B cell (primary cell): ENCODE measurements at regions of chr6 and their contacts with region 1.

Region 1: DNA sequence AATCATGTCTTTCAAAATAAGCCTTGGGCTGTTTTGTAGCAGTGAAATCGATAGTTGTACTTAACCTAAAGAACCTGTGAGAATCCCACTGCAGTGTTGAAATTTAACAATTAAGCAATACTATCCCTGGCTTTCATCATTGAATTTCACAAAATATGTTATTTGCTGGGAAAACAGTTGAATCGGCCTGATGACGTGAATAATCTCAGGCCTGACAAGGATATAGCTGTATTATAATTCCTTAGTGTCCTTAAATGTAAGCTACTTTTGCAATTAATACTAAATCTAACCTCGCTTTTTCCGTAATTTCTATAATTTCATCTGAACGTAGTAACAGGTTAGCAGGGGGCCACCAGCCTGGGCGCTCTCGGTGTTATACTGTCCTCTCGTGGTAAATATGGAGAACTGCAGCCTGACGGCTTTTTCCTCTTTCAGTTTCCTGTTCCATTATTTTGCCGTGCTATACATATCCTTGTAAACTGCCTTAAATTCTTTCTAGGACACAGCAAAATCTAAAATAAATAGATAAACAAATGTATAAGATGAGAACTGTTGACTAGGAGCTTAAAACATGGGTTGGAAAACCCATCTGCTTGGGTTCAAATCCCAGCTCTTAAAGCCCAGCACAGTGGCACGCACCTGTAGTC is 24.0 kb downstream of the MTFR2 start:
- DNase-seq: peak; percentile 79
- ATAC-seq: peak; percentile 97
- H3K4me3 ChIP-seq: peak overlapping the region in 3 of 5 experiments; percentile 25 to 49 (median 38)
- H3K4me3 Mint-ChIP-seq: peak overlapping the region; percentile 51
- H3K27ac ChIP-seq: no peak overlapping the region
- H3K27ac Mint-ChIP-seq: no peak overlapping the region
- H3K4me1 ChIP-seq: peaks cover 10 to 14% of the 10 kb centered on the region in 2 donors
- H3K4me1 Mint-ChIP-seq: peaks cover 12% of the 10 kb centered on the region
- H3K27me3 ChIP-seq: no peaks in the 10 kb centered on the region
- H3K27me3 Mint-ChIP-seq: peaks cover 3% of the 10 kb centered on the region
- CTCF ChIP-seq: peak; percentile 100

Region 2: DNA sequence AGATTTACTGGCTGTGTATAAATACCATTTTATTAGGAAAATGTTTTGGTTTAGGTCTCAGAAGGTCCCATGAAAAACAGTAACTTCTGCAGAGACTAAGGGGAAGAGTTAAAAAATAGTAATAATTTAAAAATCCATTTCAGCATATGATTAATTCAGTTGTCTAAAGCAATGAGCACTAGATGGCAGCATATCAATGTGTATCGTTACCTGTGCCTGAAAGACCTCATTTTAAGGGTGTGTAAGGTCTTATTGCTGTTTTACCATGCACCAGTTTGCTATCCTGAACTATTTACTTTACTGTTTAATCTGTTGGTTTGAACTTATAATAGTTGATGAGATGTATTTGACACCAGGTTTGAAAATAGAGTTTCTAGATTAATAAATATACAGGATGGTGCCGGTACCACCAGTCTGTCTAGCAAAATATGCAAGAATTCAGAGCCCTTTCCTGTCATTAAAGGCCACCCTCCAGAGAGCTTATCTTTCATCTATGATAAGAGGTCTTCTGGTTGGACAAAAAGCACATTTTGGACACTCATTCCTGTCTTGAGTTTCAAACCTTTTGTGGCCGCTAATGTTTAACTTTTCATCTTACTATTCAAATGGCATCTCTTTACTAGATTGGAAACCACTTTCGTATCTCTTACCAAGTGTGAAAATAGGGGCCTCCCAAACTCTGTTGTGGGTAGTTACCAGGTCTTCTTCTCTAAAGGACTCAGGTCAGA is 719.7 kb before region 1 on chr6:
- CTCF ChIA-PET with region 1: interaction called, 24 read pairs
- POLR2A ChIA-PET with region 1: no interaction called
- intact Hi-C with region 1: loop called (anchors 1 kb)
- DNase-seq: peak; percentile 58
- ATAC-seq: peak; percentile 67
- H3K4me3 ChIP-seq: no peak overlapping the region
- H3K4me3 Mint-ChIP-seq: no peak overlapping the region
- H3K27ac ChIP-seq: no peak overlapping the region
- H3K27ac Mint-ChIP-seq: no peak overlapping the region
- H3K4me1 ChIP-seq: no peaks in the 10 kb centered on the region
- H3K4me1 Mint-ChIP-seq: peaks cover 2% of the 10 kb centered on the region
- H3K27me3 ChIP-seq: no peaks in the 10 kb centered on the region
- H3K27me3 Mint-ChIP-seq: no peaks in the 10 kb centered on the region
- CTCF ChIP-seq: peak; percentile 81

Region 3: DNA sequence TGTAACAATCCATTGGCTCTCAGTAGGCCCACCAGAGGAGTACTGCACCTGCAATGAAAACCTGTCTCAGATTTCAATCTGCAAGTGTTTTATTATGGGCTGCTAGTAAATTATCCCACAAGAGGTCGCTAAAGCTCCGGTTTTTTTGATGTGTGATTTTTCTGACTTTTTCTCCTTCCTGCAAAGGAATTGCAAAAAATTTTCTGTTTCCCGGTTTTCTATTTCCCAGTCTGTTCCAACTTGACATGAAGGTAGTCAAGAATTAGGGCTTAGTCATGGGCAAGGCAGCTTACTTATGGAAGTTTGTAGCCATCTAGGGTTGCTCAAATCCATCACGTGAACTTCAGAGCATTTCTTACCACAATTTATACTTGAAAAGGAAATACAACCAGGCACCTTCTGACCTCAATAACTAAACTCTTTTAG is 690.1 kb before region 1 on chr6:
- CTCF ChIA-PET with region 1: interaction called, 48 read pairs
- POLR2A ChIA-PET with region 1: no interaction called
- intact Hi-C with region 1: loop called (anchors 1 kb)
- DNase-seq: peak; percentile 42
- ATAC-seq: no peak
- H3K4me3 ChIP-seq: no peak overlapping the region
- H3K4me3 Mint-ChIP-seq: no peak overlapping the region
- H3K27ac ChIP-seq: no peak overlapping the region
- H3K27ac Mint-ChIP-seq: no peak overlapping the region
- H3K4me1 ChIP-seq: no peaks in the 10 kb centered on the region
- H3K4me1 Mint-ChIP-seq: peaks cover 8% of the 10 kb centered on the region
- H3K27me3 ChIP-seq: no peaks in the 10 kb centered on the region
- H3K27me3 Mint-ChIP-seq: peaks cover 10% of the 10 kb centered on the region
- CTCF ChIP-seq: peak; percentile 74

Region 4: DNA sequence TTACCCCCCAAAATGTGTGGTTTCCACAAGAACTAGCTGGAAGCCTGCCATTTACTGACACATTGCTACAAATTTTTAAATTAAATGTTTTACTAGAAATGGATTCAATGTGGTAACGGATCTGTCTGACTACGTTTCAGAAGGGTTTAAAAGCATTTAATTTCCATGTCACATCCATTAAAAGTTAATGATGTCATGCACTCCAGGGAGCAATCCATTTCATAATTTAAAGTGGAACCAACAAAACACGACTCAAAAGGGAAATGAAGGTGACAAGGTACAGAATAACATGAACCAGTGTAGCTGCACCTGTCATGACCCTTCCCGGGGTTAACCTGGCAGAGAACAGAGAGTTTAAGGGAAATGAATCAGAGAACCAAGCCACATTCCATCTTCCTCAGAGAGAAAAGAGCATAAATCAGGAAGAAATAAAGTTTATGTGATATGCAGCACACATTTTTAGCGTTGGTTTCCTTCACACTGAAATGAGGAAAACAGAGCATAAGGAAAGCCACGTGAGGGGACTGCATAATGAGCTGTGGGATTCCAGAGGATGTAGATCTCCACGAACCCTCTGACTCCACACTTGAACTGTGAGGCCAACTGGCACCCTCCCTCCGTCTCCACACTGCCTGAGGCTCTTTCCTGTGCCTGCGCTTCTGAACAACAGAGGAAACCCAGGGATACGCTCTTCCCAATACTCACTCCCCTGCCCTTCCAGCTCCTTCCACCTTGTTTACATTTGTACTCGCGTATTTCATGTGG is 558.3 kb before region 1 on chr6:
- CTCF ChIA-PET with region 1: interaction called, 62 read pairs
- POLR2A ChIA-PET with region 1: no interaction called
- intact Hi-C with region 1: no loop called
- DNase-seq: no peak
- ATAC-seq: no peak
- H3K4me3 ChIP-seq: no peak overlapping the region
- H3K4me3 Mint-ChIP-seq: no peak overlapping the region
- H3K27ac ChIP-seq: no peak overlapping the region
- H3K27ac Mint-ChIP-seq: no peak overlapping the region
- H3K4me1 ChIP-seq: no peaks in the 10 kb centered on the region
- H3K4me1 Mint-ChIP-seq: no peaks in the 10 kb centered on the region
- H3K27me3 ChIP-seq: peaks cover 0 to 2% (median 0%) of the 10 kb centered on the region in 4 experiments
- H3K27me3 Mint-ChIP-seq: peaks cover 20% of the 10 kb centered on the region
- CTCF ChIP-seq: no peak

Region 5: GRCh38 chr6:135675862-135676261 is 550.3 kb before region 1 on chr6:
- CTCF ChIA-PET with region 1: interaction called, 62 read pairs
- POLR2A ChIA-PET with region 1: no interaction called
- intact Hi-C with region 1: loop called (anchors 1 kb)
- DNase-seq: peak; percentile 78
- ATAC-seq: peak; percentile 64
- H3K4me3 ChIP-seq: no peak overlapping the region
- H3K4me3 Mint-ChIP-seq: no peak overlapping the region
- H3K27ac ChIP-seq: no peak overlapping the region
- H3K27ac Mint-ChIP-seq: no peak overlapping the region
- H3K4me1 ChIP-seq: no peaks in the 10 kb centered on the region
- H3K4me1 Mint-ChIP-seq: no peaks in the 10 kb centered on the region
- H3K27me3 ChIP-seq: no peaks in the 10 kb centered on the region
- H3K27me3 Mint-ChIP-seq: no peaks in the 10 kb centered on the region
- CTCF ChIP-seq: peak; percentile 87

Region 6: DNA sequence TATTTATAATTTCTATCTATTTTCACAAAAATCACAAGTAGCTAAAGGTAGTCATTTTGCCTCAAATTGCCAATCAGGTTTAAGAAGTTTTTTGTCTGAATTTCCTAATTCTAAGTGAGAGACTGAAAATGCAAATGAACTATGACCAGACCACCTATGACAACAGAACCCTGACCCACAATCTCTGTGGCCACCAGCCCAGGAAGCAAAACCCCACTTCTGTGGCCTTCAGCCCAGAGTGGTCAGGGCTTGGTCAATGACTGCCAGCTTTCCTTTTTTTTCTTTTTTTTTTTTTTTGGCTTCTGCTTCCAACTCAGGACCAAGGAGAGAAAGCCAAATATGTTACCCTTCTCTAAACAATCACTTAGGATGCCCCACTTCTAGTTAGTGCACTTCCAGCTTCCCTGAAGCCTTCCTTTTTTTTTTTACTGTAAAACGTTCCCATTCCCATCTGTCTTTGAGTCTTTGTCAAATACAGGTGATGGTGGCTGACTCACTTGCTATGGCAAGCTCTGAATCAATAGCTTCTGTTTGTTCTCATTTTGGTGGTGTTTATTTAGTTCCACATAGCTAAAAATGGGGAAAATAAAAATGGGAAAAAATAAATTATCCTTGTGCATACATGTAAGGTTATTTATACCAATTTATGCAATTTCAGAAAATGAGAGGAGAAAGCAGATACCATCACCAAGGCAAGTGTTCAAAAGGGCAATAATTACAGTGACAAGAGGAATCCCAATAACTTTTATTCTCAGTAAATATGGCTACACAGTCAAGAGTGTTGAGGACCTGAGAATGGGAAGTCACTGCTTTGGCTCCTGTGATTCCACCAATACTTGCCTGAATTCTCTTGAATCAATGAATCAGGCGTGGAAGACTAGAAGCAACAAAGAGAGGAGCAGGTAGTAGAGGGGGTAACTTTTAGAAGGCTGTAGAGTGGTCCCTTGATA is 544.9 kb before region 1 on chr6:
- CTCF ChIA-PET with region 1: interaction called, 62 read pairs
- POLR2A ChIA-PET with region 1: no interaction called
- intact Hi-C with region 1: loop called (anchors 1 kb)
- DNase-seq: no peak
- ATAC-seq: no peak
- H3K4me3 ChIP-seq: no peak overlapping the region
- H3K4me3 Mint-ChIP-seq: no peak overlapping the region
- H3K27ac ChIP-seq: no peak overlapping the region
- H3K27ac Mint-ChIP-seq: no peak overlapping the region
- H3K4me1 ChIP-seq: no peaks in the 10 kb centered on the region
- H3K4me1 Mint-ChIP-seq: no peaks in the 10 kb centered on the region
- H3K27me3 ChIP-seq: no peaks in the 10 kb centered on the region
- H3K27me3 Mint-ChIP-seq: peaks cover 12% of the 10 kb centered on the region
- CTCF ChIP-seq: no peak

Region 7: DNA sequence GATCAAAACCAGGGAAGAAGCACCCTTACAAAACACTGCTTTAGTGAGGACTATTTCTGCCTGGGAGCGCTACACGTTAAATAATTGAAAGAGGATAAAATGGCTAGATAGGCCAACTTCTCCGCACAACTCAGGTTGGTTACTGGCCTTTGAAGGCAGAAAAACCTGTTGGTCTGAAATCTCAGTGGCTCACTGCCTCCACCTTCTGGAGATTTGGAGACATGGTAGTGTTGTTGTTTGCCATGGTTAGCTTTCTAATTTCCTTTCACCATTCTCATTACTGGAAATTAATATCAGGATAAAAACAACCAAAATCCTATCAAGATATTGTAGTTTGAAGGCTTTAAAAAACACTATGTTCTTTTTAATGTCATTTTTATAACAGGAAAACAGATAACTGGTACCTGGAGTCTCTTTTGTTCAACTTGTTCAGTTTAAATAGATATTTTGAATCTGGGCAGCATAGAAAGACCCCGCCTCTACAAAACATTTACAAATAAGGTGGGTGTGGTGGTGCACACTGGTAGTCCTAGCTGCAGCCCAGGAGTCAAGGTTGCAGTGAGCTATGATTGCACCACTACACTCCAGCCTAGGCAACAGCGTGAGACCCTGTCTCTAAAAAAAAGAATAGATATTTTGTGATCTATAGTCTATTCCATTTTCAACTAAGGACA is 91.0 kb after region 1 on chr6:
- CTCF ChIA-PET with region 1: interaction called, 18 read pairs
- POLR2A ChIA-PET with region 1: no interaction called
- intact Hi-C with region 1: no loop called
- DNase-seq: peak; percentile 72
- ATAC-seq: peak; percentile 62
- H3K4me3 ChIP-seq: no peak overlapping the region
- H3K4me3 Mint-ChIP-seq: no peak overlapping the region
- H3K27ac ChIP-seq: no peak overlapping the region
- H3K27ac Mint-ChIP-seq: no peak overlapping the region
- H3K4me1 ChIP-seq: no peaks in the 10 kb centered on the region
- H3K4me1 Mint-ChIP-seq: no peaks in the 10 kb centered on the region
- H3K27me3 ChIP-seq: no peaks in the 10 kb centered on the region
- H3K27me3 Mint-ChIP-seq: peaks cover 7% of the 10 kb centered on the region
- CTCF ChIP-seq: peak; percentile 86